Activated CD8-positive, alpha-beta T cell treated with anti-CD3 and anti-CD28 coated beads for 36 hours (primary cell): ENCODE measurements at regions of chr2 and their contacts with region 1.

Region 1: GRCh38 chr2:225008935-225009334 is 33.3 kb downstream of the DOCK10 start:
- DNase-seq: peak; percentile 49
- ATAC-seq: no peak
- H3K4me3 Mint-ChIP-seq: no peak overlapping the region
- H3K27ac Mint-ChIP-seq: peak overlapping the region; percentile 56
- H3K4me1 Mint-ChIP-seq: peaks cover 93% of the 10 kb centered on the region
- H3K27me3 Mint-ChIP-seq: no peaks in the 10 kb centered on the region
- CTCF ChIP-seq: peak; percentile 58

Region 2: DNA sequence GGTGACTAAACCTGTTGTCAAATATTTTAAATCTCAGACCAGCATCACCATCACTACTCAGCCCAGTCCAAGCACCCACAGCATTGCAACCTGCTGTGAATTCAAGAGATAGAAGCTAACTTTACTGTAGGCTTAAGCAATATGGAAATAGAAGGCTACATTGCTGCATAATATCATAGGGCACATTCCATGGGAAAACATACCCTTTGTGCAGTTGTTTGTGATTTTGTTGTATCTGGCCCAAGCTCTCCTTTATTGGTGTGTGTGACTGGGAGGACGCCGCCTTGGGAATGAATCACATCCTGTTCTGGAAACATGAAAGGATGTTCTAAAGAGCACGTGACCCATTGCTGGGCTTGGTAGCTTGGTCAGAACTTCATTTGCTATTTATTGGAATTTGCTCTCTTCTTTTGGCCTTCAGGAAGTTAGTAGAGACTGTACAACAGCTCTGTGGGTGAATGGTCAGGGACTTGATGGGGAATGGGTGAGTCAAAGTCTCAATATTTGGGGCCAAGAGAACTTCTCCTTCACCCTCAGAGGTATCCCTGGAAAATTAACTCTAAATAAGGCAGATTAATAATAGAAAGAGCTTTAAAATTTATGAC is 863.1 kb before region 1 on chr2:
- CTCF ChIA-PET with region 1: no interaction called
- POLR2A ChIA-PET with region 1: no interaction called
- intact Hi-C with region 1: no loop called
- DNase-seq: no peak
- ATAC-seq: no peak
- H3K4me3 Mint-ChIP-seq: no peak overlapping the region
- H3K27ac Mint-ChIP-seq: no peak overlapping the region
- H3K4me1 Mint-ChIP-seq: no peaks in the 10 kb centered on the region
- H3K27me3 Mint-ChIP-seq: peaks cover 15% of the 10 kb centered on the region
- CTCF ChIP-seq: no peak

Region 3: DNA sequence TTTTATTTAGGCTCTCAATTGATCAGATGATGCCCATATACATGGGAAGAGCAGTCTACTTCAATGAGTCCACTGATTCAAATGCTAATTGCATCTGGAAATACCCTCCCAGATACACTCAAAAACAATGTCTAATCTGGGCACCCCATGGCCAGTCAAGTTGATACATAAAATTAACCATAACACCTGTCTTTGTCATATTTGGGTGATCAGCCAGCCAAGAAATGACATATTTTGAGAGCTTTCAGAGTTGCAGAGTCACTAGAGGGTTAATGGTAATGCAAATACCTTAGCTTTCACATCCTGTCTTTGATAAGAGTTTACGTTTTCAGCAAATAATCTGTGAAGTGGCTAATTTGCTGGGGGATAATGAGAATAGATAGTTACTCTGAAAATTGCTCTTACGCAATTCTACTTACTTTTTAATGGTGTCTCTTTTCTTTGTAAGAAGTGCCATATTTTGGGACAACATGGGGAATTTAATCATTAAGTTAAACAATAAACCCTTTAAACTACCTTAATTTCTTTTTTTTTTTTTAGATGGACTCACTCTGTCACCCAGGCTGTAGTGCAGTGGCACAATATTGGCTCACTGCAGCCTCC is 341.9 kb before region 1 on chr2:
- CTCF ChIA-PET with region 1: no interaction called
- POLR2A ChIA-PET with region 1: no interaction called
- intact Hi-C with region 1: no loop called
- DNase-seq: no peak
- ATAC-seq: no peak
- H3K4me3 Mint-ChIP-seq: no peak overlapping the region
- H3K27ac Mint-ChIP-seq: no peak overlapping the region
- H3K4me1 Mint-ChIP-seq: no peaks in the 10 kb centered on the region
- H3K27me3 Mint-ChIP-seq: peaks cover 4% of the 10 kb centered on the region
- CTCF ChIP-seq: no peak

Region 4: GRCh38 chr2:224711859-224712665 is 296.9 kb before region 1 on chr2:
- CTCF ChIA-PET with region 1: no interaction called
- POLR2A ChIA-PET with region 1: no interaction called
- intact Hi-C with region 1: no loop called
- DNase-seq: no peak
- ATAC-seq: no peak
- H3K4me3 Mint-ChIP-seq: no peak overlapping the region
- H3K27ac Mint-ChIP-seq: no peak overlapping the region
- H3K4me1 Mint-ChIP-seq: no peaks in the 10 kb centered on the region
- H3K27me3 Mint-ChIP-seq: peaks cover 12% of the 10 kb centered on the region
- CTCF ChIP-seq: no peak

Region 5: GRCh38 chr2:225020168-225020849 is 11.4 kb after region 1 on chr2:
- CTCF ChIA-PET with region 1: interaction called, 13 read pairs
- POLR2A ChIA-PET with region 1: interaction called, 3 read pairs
- intact Hi-C with region 1: no loop called
- DNase-seq: no peak
- ATAC-seq: peak; percentile 82
- H3K4me3 Mint-ChIP-seq: no peak overlapping the region
- H3K27ac Mint-ChIP-seq: peak overlapping the region; percentile 80
- H3K4me1 Mint-ChIP-seq: peaks cover 74% of the 10 kb centered on the region
- H3K27me3 Mint-ChIP-seq: no peaks in the 10 kb centered on the region
- CTCF ChIP-seq: no peak

Region 6: DNA sequence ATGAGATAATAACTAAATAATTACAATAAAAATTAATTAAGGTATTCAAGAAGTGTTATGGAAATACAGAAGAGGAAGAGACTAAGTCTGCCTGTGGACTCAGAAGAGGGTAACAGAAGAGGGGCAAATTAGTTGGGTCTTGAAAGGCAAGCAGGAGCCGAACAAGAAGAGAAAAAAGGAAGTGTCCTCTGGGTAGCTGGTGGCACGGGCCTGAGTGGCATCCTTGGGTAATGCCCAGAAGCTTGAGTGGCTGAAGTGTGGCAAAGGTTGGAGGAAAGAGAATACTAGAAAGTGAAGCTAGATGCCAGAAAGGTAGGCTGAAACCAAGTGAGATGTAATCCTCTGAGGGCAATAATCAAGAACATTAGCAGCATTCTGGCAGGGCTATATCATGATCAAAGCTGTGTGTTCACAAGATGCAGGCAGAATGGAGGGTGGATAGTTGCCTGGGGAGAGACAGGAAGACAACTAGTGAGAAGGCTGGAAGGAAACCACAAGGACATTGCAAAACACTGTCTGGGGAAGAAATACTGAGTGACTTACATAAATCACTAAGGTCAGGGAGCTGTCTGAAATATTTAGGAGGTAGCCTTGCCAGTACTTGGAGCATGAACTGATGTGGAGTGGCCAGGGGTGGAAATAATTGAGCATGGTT is 17.1 kb after region 1 on chr2:
- CTCF ChIA-PET with region 1: interaction called, 13 read pairs
- POLR2A ChIA-PET with region 1: interaction called, 3 read pairs
- intact Hi-C with region 1: loop called (anchors 2 kb)
- DNase-seq: no peak
- ATAC-seq: peak; percentile 18
- H3K4me3 Mint-ChIP-seq: no peak overlapping the region
- H3K27ac Mint-ChIP-seq: peak overlapping the region; percentile 87
- H3K4me1 Mint-ChIP-seq: peaks cover 78% of the 10 kb centered on the region
- H3K27me3 Mint-ChIP-seq: no peaks in the 10 kb centered on the region
- CTCF ChIP-seq: no peak